Activated T-helper 1 cell treated with anti-CD3 and anti-CD28 coated beads, Interleukin-12 subunit alpha, Interleukin-12 subunit beta, Interleukin-2, Interleukin-4 antibody, amounts not matched to agents 30 ng/mL and 10 ng/mL and 1 ng/mL, durations not matched to agents 14 hours and 24 hours and 36 hours (primary cell): ENCODE measurements at regions of chr11 and their contacts with region 1.

Region 1: GRCh38 chr11:3929649-3930048 is 74.2 kb downstream of the STIM1 start:
- DNase-seq: no peak
- H3K4me3 Mint-ChIP-seq: no peak overlapping the region
- H3K27ac Mint-ChIP-seq: no peak overlapping the region
- H3K4me1 Mint-ChIP-seq: peaks cover 49% of the 10 kb centered on the region
- H3K27me3 Mint-ChIP-seq: no peaks in the 10 kb centered on the region

Region 2: DNA sequence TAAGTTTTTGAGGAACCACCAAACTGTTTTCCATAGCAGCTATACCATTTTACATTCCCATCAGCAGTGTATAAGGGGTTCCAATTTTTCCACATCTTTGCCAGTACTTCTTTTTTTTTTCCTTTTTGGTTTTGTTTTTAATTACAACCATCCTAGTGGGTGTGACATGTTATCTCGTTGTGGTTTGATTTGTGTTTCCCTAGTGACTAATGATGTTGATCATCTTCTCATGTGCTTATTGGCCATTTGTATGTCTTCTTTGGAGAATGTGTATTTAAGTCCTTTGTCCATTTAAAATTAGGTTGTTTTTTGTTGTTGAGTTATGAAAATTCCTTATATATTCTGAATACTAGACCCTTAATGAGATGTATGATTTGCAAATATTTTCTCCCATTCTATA is 14.8 kb before region 1 on chr11:
- intact Hi-C with region 1: loop called (anchors 2 kb)
- DNase-seq: no peak
- H3K4me3 Mint-ChIP-seq: no peak overlapping the region
- H3K27ac Mint-ChIP-seq: no peak overlapping the region
- H3K4me1 Mint-ChIP-seq: peaks cover 42% of the 10 kb centered on the region
- H3K27me3 Mint-ChIP-seq: no peaks in the 10 kb centered on the region